ENCODE measurements at regions of chr12 and their contacts with region 1.

Region 1: GRCh38 chr12:52870351-52871290 is 21.8 kb upstream of the KRT78 start:
- DNase-seq: no peak
- ATAC-seq: peak; percentile 69
- H3K4me3 ChIP-seq: no peak overlapping the region
- H3K27ac ChIP-seq: no peak overlapping the region
- H3K4me1 ChIP-seq: peaks cover 33% of the 10 kb centered on the region
- H3K27me3 ChIP-seq: no peaks in the 10 kb centered on the region
- CTCF ChIP-seq: peak; percentile 96

Region 2: DNA sequence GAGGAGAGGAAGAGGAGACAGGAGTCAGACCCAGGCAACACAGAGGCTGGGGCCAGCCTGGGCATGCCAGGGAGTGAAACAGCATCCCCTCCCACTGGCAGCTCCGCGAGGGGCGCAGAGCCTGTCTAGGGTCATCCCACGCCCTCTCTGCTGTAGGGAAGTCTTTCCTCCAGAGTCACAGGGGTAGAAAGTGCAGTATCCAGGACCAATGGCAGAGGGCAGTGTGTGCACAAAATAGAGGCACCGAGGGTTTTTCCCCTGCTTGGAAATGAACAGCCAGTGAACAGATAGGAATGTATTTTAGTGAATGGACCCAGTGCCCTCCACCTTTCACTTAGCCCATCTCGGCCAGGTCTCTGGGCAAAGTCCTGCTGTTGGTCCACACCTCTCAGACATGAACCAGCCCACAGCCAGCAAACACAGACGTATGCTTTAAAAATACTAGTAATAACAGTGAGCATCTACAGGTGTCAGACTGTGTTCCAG is 287.6 kb before region 1 on chr12:
- CTCF ChIA-PET with region 1: interaction called, 7 read pairs
- POLR2A ChIA-PET with region 1: no interaction called
- in situ Hi-C with region 1: no loop called
- intact Hi-C with region 1: loop called (anchors 2 kb)
- DNase-seq: peak; percentile 46
- ATAC-seq: peak; percentile 92
- H3K4me3 ChIP-seq: no peak overlapping the region
- H3K27ac ChIP-seq: no peak overlapping the region
- H3K4me1 ChIP-seq: no peaks in the 10 kb centered on the region
- H3K27me3 ChIP-seq: peaks cover 6% of the 10 kb centered on the region
- CTCF ChIP-seq: peak; percentile 84